Activated CD8-positive, alpha-beta T cell treated with anti-CD3 and anti-CD28 coated beads, Interleukin-2, amount 10 ng/mL, durations not matched to agents 7 days and 5 days (primary cell): ENCODE measurements at regions of chr2 and their contacts with region 1.

Region 1: DNA sequence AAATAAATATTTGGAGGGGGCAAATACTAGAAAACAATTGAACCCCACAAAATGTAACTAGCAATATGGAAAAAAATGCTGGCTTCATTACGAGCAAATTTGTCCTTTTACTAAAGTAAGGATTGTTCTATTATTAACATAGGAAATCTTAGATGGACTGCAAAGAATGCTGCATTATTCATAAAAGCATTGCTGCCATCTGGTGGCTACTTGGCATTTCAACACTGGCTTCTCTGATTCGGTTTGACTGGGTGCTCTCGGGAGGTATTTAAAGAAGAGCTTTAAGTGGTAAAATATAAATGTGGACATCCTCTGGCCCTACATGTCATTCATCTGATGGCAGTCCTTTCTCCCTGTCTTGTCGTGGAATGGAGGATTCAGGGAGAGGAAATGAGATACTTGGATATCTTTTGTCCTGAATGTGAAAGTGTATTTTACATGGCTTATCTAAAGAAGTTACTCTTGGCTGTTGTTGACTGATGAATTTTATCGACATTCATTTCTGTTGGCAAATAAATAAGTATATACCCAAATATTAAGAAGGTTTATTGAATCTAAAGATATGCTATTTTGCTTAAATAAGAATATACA is 130.2 kb downstream of the ARHGAP15 start:
- DNase-seq: peak; percentile 87
- ATAC-seq: peak; percentile 40
- H3K4me3 Mint-ChIP-seq: peak overlapping the region; percentile 67
- H3K27ac Mint-ChIP-seq: peak overlapping the region; percentile 98
- H3K4me1 Mint-ChIP-seq: peaks cover 79% of the 10 kb centered on the region
- H3K27me3 Mint-ChIP-seq: no peaks in the 10 kb centered on the region

Region 2: DNA sequence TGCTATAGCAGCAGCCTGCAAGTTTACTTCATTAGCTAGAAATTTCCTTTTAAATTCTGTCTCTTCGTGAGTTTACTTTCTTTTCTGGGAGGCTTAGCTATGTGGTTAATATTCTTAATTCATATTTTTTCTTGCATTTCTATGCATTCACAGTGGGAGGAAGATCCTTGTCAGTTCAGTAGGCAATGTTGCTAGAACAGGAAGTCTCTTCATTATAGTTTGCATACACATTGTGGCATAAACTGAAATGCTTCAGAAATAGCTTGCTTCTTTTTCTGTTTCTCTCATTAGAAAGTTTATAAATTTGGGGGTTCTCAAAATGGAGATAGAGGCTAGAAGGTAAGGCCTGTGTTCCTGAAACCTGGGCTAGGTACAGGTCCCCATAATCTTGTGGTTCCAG is 138.4 kb before region 1 on chr2:
- CTCF ChIA-PET with region 1: interaction called, 106 read pairs
- POLR2A ChIA-PET with region 1: no interaction called
- DNase-seq: no peak
- ATAC-seq: no peak
- H3K4me3 Mint-ChIP-seq: no peak overlapping the region
- H3K27ac Mint-ChIP-seq: no peak overlapping the region
- H3K4me1 Mint-ChIP-seq: peaks cover 16% of the 10 kb centered on the region
- H3K27me3 Mint-ChIP-seq: no peaks in the 10 kb centered on the region

Region 3: DNA sequence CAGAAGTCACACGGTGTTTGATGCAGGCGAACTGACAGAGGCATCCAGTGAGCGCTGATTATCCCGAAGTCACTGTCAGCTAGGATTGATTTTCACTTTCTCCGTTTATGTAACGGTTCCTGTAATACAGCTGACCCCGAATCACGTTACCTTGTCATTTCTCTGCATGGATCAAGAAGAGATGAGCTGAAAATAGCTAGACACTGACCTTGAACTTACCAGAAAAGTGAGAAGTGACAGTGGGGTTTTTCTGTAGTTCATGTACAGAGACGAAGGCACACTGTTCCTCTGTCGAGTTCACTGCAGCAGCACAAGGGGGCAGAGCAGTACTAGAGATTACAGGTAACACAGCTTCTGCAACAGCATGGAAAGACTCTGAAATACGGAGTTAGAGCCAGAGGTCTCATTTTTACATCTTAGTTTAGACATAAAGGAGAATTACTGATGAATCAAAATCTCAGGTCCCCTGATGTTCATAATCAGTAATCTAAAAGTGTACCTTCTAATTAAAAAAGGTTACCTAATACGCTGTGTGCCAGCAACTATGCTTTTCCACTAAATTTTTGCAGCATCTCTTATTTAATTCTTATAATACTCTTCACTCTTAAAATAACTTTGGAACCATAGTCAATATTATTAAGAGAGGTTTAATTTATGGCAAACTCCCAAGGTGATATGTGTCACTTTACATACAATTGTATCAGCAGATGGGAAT is 97.2 kb before region 1 on chr2:
- CTCF ChIA-PET with region 1: interaction called, 90 read pairs
- POLR2A ChIA-PET with region 1: interaction called, 3 read pairs
- DNase-seq: peak; percentile 67
- ATAC-seq: peak; percentile 94
- H3K4me3 Mint-ChIP-seq: no peak overlapping the region
- H3K27ac Mint-ChIP-seq: peak overlapping the region; percentile 5
- H3K4me1 Mint-ChIP-seq: peaks cover 59% of the 10 kb centered on the region
- H3K27me3 Mint-ChIP-seq: no peaks in the 10 kb centered on the region

Region 4: GRCh38 chr2:143210446-143210819 is 49.0 kb before region 1 on chr2:
- CTCF ChIA-PET with region 1: interaction called, 112 read pairs
- POLR2A ChIA-PET with region 1: interaction called, 4 read pairs
- DNase-seq: no peak
- ATAC-seq: no peak
- H3K4me3 Mint-ChIP-seq: no peak overlapping the region
- H3K27ac Mint-ChIP-seq: no peak overlapping the region
- H3K4me1 Mint-ChIP-seq: peaks cover 20% of the 10 kb centered on the region
- H3K27me3 Mint-ChIP-seq: no peaks in the 10 kb centered on the region

Region 5: DNA sequence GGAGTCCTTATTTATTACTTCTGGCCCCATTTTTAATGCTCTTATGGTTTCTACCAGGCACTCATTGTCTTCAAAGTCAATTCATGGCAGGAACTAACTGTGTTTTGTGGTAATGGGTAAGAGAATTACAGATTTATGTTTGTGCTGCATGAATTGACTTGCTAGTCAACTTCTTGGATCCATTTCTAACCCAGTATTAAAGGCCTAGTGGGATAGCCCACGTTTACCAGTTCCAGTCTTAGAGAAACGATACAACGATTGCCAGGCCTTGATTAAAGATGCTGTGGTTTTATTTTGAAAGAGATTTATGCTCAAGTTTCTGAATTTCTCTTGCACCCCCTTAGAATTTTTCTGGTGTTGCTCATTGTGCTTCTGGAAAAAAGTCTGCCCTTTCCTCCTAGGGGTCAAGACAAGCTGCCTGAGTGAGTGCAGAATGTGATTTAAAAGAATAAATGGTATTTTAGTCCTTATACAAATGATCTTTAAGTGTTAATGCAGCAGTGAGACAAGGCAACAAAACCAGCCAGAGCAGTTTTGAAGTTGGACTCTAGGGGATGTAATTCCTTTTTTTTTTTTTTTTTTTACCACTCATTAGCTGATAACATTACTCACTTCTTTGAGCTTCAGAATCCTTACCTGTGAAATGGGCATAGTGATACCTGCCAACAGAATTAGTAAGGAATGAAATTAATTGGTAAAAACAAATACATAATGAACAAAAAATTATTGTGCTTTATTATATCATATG is 28.8 kb before region 1 on chr2:
- CTCF ChIA-PET with region 1: interaction called, 12 read pairs
- POLR2A ChIA-PET with region 1: interaction called, 4 read pairs
- DNase-seq: no peak
- ATAC-seq: no peak
- H3K4me3 Mint-ChIP-seq: no peak overlapping the region
- H3K27ac Mint-ChIP-seq: peak overlapping the region; percentile 26
- H3K4me1 Mint-ChIP-seq: peaks cover 40% of the 10 kb centered on the region
- H3K27me3 Mint-ChIP-seq: no peaks in the 10 kb centered on the region

Region 6: DNA sequence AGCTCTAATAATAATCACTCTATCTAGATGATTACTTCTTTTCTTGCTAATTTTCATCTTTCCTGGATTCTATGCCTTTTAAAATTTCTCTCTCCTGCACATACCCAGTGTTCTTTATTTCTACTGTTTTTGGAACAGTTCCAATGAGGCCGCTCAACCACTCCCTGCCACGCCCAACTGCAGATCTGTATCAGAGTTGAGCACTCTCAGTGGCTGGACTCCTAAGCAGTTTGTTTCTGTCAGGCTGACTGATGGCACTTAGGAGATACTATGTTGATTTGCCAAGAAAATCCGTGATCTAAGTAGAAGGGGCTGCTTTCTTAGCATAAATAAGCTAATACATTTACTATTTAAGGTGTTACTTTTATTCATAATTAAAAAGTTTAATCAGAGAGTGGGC is 62.5 kb after region 1 on chr2:
- CTCF ChIA-PET with region 1: no interaction called
- POLR2A ChIA-PET with region 1: no interaction called
- DNase-seq: no peak
- ATAC-seq: no peak
- H3K4me3 Mint-ChIP-seq: no peak overlapping the region
- H3K27ac Mint-ChIP-seq: no peak overlapping the region
- H3K4me1 Mint-ChIP-seq: peaks cover 11% of the 10 kb centered on the region
- H3K27me3 Mint-ChIP-seq: no peaks in the 10 kb centered on the region

Region 7: GRCh38 chr2:143564419-143564818 is 305.0 kb after region 1 on chr2:
- CTCF ChIA-PET with region 1: no interaction called
- POLR2A ChIA-PET with region 1: no interaction called
- DNase-seq: no peak
- ATAC-seq: no peak
- H3K4me3 Mint-ChIP-seq: no peak overlapping the region
- H3K27ac Mint-ChIP-seq: no peak overlapping the region
- H3K4me1 Mint-ChIP-seq: no peaks in the 10 kb centered on the region
- H3K27me3 Mint-ChIP-seq: no peaks in the 10 kb centered on the region